Heart right ventricle (tissue), 16 donors: ENCODE measurements at regions of chr6 and their contacts with region 1.

Region 1: GRCh38 chr6:83615025-83615999 is 93.6 kb downstream of the SNAP91 start:
- DNase-seq: no peak
- ATAC-seq: no peak
- H3K4me3 ChIP-seq: no peak overlapping the region
- H3K27ac ChIP-seq: no peak overlapping the region
- H3K4me1 ChIP-seq: no peaks in the 10 kb centered on the region
- H3K27me3 ChIP-seq: no peaks in the 10 kb centered on the region
- CTCF ChIP-seq: peak in 8 of 9 donors; percentile 26 to 63 (median 50)

Region 2: GRCh38 chr6:83859410-83860358 is 244.4 kb after region 1 on chr6 and contains the start of gene CYB5R4:
- intact Hi-C with region 1: no loop called
- DNase-seq: peak; percentile 95
- ATAC-seq: peak; percentile 100
- H3K4me3 ChIP-seq: peak within 1 kb of the TSS; percentile 67 to 94 (median 79)
- H3K27ac ChIP-seq: peak within 1 kb of the TSS; percentile 57 to 93 (median 84)
- H3K4me1 ChIP-seq: peaks cover 3 to 25% (median 21%) of the 10 kb centered on the region in 9 donors
- H3K27me3 ChIP-seq: peaks cover 0 to 21% (median 7%) of the 10 kb centered on the region in 7 donors
- CTCF ChIP-seq: peak in 8 of 9 donors; percentile 26 to 68 (median 47)
- total RNA-seq, gene CYB5R4: 10.6 to 20.0 (median 16.0) TPM

Region 3: GRCh38 chr6:84220809-84221409 is 605.6 kb after region 1 on chr6:
- intact Hi-C with region 1: loop called in 4 of 10 experiments (anchors 5 to 10 kb)
- DNase-seq: no peak
- ATAC-seq: no peak
- H3K4me3 ChIP-seq: no peak overlapping the region
- H3K27ac ChIP-seq: no peak overlapping the region
- H3K4me1 ChIP-seq: no peaks in the 10 kb centered on the region
- H3K27me3 ChIP-seq: no peaks in the 10 kb centered on the region
- CTCF ChIP-seq: peak; percentile 24 to 70 (median 65)

Region 4: DNA sequence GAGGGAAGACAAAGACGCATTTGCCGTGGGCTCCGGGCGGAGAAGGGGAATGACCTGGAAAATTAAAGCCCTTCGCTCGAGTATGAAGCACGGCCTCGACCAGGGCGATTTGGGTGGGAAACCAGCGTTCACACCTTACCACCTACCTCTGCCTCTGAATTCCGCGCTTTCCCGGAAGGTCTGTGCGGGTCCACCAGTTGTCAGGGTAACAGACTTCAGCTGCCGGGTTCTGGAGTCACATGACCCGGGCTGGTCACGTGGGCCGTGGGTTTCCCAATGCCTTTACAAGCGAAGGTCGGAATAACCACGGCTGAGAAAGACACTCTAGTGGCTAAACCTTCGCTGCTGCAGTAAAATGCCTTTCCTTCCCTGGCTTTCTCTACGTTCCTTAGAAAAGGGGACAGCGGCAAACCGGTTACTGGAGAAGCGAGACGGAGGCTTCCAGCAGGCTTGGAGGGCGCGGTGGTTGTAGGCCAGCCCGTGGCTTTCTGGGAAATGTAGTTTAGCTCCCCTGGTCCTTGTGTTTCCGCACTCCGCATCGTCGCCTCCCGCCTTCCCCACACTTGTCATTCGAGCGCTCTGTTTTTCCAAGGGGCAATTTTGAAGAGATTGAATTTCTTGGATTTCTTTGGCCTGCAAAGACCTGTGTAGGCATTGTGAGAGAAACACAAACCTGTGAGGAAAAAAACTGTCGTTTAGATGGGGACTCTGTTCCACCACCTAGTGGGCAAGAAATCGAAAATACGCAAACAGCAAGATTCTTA is 612.3 kb after region 1 on chr6 and contains the start of gene CEP162:
- intact Hi-C with region 1: loop called in 2 of 10 experiments (anchors 5 to 10 kb)
- DNase-seq: peak; percentile 90 to 92
- ATAC-seq: peak; percentile 97 to 99 (median 98)
- H3K4me3 ChIP-seq: peak within 1 kb of the TSS; percentile 66 to 90 (median 82)
- H3K27ac ChIP-seq: peak within 1 kb of the TSS; percentile 78 to 94 (median 86)
- H3K4me1 ChIP-seq: peaks cover 0 to 15% (median 7%) of the 10 kb centered on the region in 9 donors
- H3K27me3 ChIP-seq: peaks cover 0 to 25% (median 9%) of the 10 kb centered on the region in 7 donors
- CTCF ChIP-seq: peak; percentile 29 to 82 (median 68)
- total RNA-seq, gene CEP162: 2.7 to 5.6 (median 3.8) TPM